ENCODE measurements at regions of chr13 and their contacts with region 1.

Region 1: DNA sequence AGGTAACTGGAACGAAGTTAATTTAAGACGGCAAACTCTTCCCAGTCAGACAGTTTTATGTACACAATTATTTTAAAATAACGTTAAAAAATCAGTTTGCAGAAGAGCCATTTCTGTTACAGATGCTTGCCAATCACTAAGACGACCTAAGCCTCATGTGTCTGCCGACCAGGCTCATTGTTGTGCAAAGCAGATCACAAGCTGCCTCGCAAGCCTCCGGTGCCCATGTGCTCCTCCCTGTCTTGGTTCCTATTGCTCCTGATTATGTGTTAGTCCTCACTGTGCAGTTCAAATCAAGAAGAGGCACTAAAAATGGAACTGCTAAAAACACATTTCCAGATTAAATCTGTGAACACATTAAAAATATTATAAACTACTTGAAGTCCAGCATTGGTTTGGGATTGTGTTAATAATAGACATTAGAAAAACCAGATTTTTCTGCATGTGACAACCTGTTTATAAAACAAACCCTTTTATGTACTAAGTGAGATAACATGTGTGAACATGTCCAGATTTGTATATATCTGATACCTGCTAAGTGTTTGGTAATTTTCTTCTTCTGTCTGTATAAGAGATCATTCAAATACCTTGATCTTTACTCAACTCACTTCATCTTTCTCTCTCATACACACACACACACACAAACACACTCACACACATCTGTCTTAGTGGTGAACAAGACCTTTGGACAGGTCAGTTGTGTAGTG is 81.9 kb upstream of the SLC15A1 start:
- DNase-seq: no peak
- H3K4me3 ChIP-seq: no peak overlapping the region
- H3K27ac ChIP-seq: no peak overlapping the region
- H3K4me1 ChIP-seq: no peaks in the 10 kb centered on the region
- H3K27me3 ChIP-seq: no peaks in the 10 kb centered on the region
- CTCF ChIP-seq: no peak

Region 2: GRCh38 chr13:97582170-97582569 is 1252.2 kb before region 1 on chr13:
- CTCF ChIA-PET with region 1: no interaction called
- POLR2A ChIA-PET with region 1: interaction called, 20 read pairs
- intact Hi-C with region 1: no loop called
- DNase-seq: no peak
- H3K4me3 ChIP-seq: no peak overlapping the region
- H3K27ac ChIP-seq: no peak overlapping the region
- H3K4me1 ChIP-seq: no peaks in the 10 kb centered on the region
- H3K27me3 ChIP-seq: no peaks in the 10 kb centered on the region
- CTCF ChIP-seq: no peak

Measured in A673 (cell line).